Calu3 (cell line): ENCODE measurements at regions of chr15 and their contacts with region 1.

Region 1: DNA sequence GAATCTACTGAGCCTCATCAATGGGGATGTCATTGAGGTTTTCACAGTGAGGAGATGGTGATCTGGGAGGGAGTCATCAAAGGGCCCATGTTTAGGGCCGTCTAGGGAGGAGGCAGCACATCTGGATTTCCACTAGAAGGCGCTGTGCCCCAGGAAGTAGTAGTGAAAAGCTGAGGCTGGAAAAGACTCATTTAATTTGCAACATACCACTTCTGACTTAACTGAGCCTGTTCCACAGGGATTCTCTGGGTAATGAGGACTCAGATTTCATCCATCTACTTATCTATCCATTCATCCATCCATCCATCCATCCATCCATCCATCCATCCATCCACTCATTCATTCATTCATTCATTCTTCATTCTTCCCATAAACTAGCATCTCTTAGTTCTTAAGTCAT is 17.4 kb upstream of the SHF start:
- DNase-seq: peak; percentile 78
- H3K4me3 Mint-ChIP-seq: no peak overlapping the region
- H3K27ac Mint-ChIP-seq: no peak overlapping the region
- H3K4me1 Mint-ChIP-seq: no peaks in the 10 kb centered on the region
- H3K27me3 Mint-ChIP-seq: no peaks in the 10 kb centered on the region
- CTCF ChIP-seq: peak; percentile 75

Region 2: GRCh38 chr15:45268135-45268534 is 62.9 kb after region 1 on chr15:
- CTCF ChIA-PET with region 1: interaction called, 5 read pairs
- intact Hi-C with region 1: loop called (anchors 1 kb)
- DNase-seq: peak; percentile 74
- H3K4me3 Mint-ChIP-seq: no peak overlapping the region
- H3K27ac Mint-ChIP-seq: no peak overlapping the region
- H3K4me1 Mint-ChIP-seq: no peaks in the 10 kb centered on the region
- H3K27me3 Mint-ChIP-seq: no peaks in the 10 kb centered on the region
- CTCF ChIP-seq: peak; percentile 22